Transverse colon (tissue), 4 donors: ENCODE measurements at regions of chr16 and their contacts with region 1.

Region 1: DNA sequence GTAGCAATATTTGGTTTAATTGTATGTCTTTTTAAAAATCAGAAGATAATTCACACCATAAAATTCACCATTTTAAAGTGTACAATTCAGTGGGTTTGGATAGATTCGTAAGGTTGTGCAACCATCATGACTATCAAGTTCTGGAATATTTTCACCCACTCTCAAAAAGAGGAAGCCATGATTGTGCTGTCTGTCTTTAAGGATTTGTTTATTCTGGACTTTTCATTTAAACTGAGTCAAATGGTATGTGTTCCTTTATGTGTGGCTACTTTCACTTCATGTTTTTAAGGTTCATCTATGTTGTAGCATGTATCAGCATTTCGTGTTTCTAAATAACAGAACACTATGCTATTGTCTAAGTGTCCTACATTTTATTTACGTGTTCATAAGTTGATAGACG is 68.1 kb upstream of the CPHXL start:
- DNase-seq: no peak
- H3K4me3 ChIP-seq: no peak overlapping the region
- H3K27ac ChIP-seq: no peak overlapping the region
- H3K4me1 ChIP-seq: no peaks in the 10 kb centered on the region
- H3K27me3 ChIP-seq: no peaks in the 10 kb centered on the region
- CTCF ChIP-seq: no peak
- EP300 ChIP-seq: no peak
- POLR2A ChIP-seq: no peak

Region 2: DNA sequence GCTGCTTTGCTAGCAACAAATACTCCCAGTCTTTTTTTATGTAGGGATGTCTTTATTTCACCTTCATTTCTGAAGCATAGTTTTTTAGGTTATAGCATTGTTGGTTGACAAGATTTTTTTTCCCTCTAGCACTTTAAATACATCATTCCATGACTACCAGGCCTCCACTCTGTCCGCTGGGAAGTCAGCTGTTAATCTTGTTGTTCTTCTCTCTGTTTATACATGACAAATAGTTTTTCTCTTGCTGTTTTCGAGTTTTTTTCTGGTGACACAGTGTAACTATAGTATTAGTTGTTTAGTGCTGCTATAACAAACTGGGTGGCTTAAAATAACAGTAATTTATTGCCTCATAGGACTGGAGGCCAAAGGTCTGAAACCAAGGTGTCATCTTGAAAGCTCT is 277.3 kb after region 1 on chr16:
- in situ Hi-C with region 1: no loop called
- intact Hi-C with region 1: no loop called
- DNase-seq: no peak
- H3K4me3 ChIP-seq: no peak overlapping the region
- H3K27ac ChIP-seq: no peak overlapping the region
- H3K4me1 ChIP-seq: no peaks in the 10 kb centered on the region
- H3K27me3 ChIP-seq: no peaks in the 10 kb centered on the region
- CTCF ChIP-seq: no peak
- EP300 ChIP-seq: no peak
- POLR2A ChIP-seq: no peak

Region 3: GRCh38 chr16:77171745-77172635 is 1377.6 kb after region 1 on chr16:
- in situ Hi-C with region 1: loop called (anchors 10 kb)
- intact Hi-C with region 1: loop called (anchors 5 kb)
- DNase-seq: no peak
- H3K4me3 ChIP-seq: no peak overlapping the region
- H3K27ac ChIP-seq: no peak overlapping the region
- H3K4me1 ChIP-seq: no peaks in the 10 kb centered on the region
- H3K27me3 ChIP-seq: peaks cover 10% of the 10 kb centered on the region
- CTCF ChIP-seq: peak; percentile 63 to 72 (median 72)
- EP300 ChIP-seq: no peak
- POLR2A ChIP-seq: no peak